ENCODE measurements at regions of chr15 and their contacts with region 1.

Region 1: DNA sequence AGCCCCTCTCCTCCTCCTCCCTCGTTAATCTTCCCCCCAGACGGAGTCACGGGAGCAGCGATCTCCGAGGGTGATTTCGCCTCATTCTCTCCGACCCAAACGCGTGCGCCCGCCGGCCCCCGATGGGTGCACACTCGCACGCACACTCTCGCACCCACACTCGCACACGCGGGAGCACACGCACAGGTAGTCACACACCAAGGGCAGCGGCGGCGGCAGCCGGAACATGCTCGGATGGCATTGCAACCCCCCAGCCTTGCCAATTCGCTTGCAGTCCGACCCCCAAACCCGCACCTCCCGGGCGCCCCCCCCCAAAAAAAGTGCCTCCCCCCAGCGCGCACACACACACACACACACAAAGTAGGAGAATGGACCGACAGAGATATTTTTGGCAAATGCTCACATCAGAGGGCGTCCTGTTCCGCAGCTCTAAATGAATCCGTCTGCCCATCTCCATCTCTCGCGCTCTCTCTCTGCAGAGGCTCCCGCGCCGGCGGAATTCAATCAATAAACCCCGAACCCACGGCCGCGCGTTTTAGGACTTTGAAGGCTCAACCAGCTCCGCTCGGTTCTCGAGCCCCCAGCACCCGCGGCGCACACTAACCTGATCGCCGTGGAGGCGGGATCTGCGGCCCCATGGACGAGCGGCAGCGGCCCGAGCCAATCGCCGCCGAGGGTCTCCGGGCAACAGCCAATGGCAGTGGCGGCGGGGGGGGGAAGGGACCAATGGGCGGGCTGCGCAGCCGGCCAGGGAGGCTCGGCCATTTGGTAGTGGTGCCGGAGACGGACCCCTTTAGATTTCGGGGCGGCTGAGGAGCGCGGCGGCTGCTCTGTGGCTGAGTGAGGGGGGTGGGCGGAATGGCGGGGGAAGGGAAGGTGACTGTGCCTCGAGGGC is at the start of gene ANP32A:
- DNase-seq: peak; percentile 99
- ATAC-seq: peak; percentile 77 to 92 (median 86)
- H3K4me3 ChIP-seq: peak within 1 kb of the TSS; percentile 73 to 94 (median 90)
- H3K27ac ChIP-seq: peak within 1 kb of the TSS; percentile 99 to 100 (median 100)
- H3K4me1 ChIP-seq: peaks cover 7 to 32% (median 26%) of the 10 kb centered on the region in 9 donors
- H3K27me3 ChIP-seq: no peaks in the 10 kb centered on the region
- CTCF ChIP-seq: no peak
- total RNA-seq, gene ANP32A: 122 to 201 (median 152) TPM

Region 2: DNA sequence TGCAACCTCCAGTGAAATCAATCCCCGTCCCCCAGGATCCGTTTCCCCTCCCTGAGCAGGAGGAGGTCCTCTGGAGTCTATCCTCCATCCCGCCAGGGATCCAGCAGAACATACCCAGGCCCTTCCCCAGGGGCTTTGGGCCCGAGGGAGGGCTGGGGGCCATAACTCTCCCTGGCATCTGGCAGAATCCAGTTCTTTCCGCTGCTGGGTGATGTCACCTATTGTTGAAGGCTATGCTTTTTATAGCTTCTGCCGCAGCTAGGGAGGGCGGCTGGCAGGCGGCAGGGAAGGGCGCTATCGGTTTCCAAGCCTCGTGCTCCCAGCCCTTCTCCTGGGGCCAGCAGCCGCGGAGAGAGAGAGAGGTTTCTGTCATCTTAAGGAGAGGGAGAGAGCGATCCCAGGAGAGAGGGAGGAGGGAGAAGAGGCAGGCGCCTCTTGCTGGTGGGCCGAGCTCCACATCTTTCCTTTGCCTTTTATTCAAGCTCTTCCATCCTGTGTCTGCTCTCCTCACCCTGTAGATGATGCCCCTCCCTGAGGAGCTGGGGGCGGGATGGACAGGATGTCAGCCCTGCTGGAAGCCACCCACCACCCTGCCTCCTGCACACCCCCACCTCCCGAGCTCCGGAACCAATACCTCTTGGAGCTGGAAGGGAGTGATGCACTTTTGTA is 120.0 kb before region 1 on chr15:
- intact Hi-C with region 1: loop called in 2 of 10 experiments (anchors 1 to 5 kb)
- DNase-seq: peak; percentile 74 to 81
- ATAC-seq: peak; percentile 82 to 90 (median 87)
- H3K4me3 ChIP-seq: peak overlapping the region in 7 of 10 donors; percentile 1 to 28 (median 23)
- H3K27ac ChIP-seq: peak overlapping the region; percentile 69 to 96 (median 87)
- H3K4me1 ChIP-seq: peaks cover 29 to 75% (median 51%) of the 10 kb centered on the region in 9 donors
- H3K27me3 ChIP-seq: no peaks in the 10 kb centered on the region
- CTCF ChIP-seq: peak in 2 of 9 donors; percentile 3 to 14

Region 3: GRCh38 chr15:68775671-68776476 is 44.7 kb before region 1 on chr15:
- intact Hi-C with region 1: loop called in 6 of 10 experiments (anchors 5 kb)
- DNase-seq: peak; percentile 85 to 90
- ATAC-seq: peak; percentile 86 to 95 (median 90)
- H3K4me3 ChIP-seq: no peak overlapping the region
- H3K27ac ChIP-seq: peak overlapping the region; percentile 20 to 88 (median 66)
- H3K4me1 ChIP-seq: peaks cover 6 to 33% (median 25%) of the 10 kb centered on the region in 9 donors
- H3K27me3 ChIP-seq: no peaks in the 10 kb centered on the region
- CTCF ChIP-seq: no peak

Region 4: GRCh38 chr15:68783226-68784058 is 37.1 kb before region 1 on chr15:
- intact Hi-C with region 1: loop called in 8 of 10 experiments (anchors 5 kb)
- DNase-seq: peak in 1 of 2 donors; percentile 41
- ATAC-seq: peak in 6 of 8 donors; percentile 38 to 51 (median 44)
- H3K4me3 ChIP-seq: no peak overlapping the region
- H3K27ac ChIP-seq: peak overlapping the region in 5 of 10 donors; percentile 3 to 90 (median 74)
- H3K4me1 ChIP-seq: peaks cover 10 to 41% (median 33%) of the 10 kb centered on the region in 9 donors
- H3K27me3 ChIP-seq: no peaks in the 10 kb centered on the region
- CTCF ChIP-seq: peak; percentile 37 to 77 (median 66)

Region 5: DNA sequence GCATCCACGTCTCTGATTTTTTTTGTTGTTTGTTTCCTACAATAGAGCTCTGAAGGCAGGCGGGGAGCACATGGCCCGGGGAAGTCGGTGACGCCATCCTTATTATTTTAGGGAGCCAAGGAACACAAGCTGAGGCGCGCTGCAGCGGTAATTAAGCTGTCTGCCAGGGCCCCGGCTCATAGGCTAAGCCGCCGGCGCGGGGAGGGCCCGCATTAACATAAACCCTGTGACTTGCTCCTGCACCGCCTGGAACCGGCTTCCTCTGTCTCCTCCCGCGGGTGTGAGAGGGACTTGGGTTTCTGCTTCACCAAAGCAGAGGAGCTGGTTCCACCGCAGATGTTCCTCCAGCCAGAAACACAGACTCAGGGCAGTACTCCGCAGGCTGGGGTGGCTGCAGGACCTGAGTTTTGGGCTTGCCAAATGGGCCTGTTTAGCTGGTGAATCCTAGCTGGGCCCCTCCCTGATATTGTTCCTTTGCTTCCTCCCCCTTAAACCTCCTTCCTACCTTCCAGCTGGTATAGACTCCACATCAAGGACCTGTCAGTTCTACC is 25.2 kb before region 1 on chr15:
- intact Hi-C with region 1: loop called in 4 of 10 experiments (anchors 2 kb)
- DNase-seq: peak; percentile 87 to 93
- ATAC-seq: peak; percentile 92 to 97 (median 95)
- H3K4me3 ChIP-seq: peak overlapping the region in 7 of 10 donors; percentile 9 to 22 (median 18)
- H3K27ac ChIP-seq: peak overlapping the region; percentile 65 to 91 (median 78)
- H3K4me1 ChIP-seq: peaks cover 50 to 100% (median 97%) of the 10 kb centered on the region in 9 donors
- H3K27me3 ChIP-seq: no peaks in the 10 kb centered on the region
- CTCF ChIP-seq: no peak

Region 6: GRCh38 chr15:68885070-68885469 is 64.5 kb after region 1 on chr15:
- intact Hi-C with region 1: no loop called
- DNase-seq: no peak
- ATAC-seq: peak in 1 of 8 donors; percentile 18
- H3K4me3 ChIP-seq: no peak overlapping the region
- H3K27ac ChIP-seq: no peak overlapping the region
- H3K4me1 ChIP-seq: peaks cover 0 to 11% (median 0%) of the 10 kb centered on the region in 9 donors
- H3K27me3 ChIP-seq: peaks cover 0 to 9% (median 0%) of the 10 kb centered on the region in 7 donors
- CTCF ChIP-seq: no peak

Measured in heart right ventricle (tissue), 16 donors.